ENCODE measurements at regions of chr4 and their contacts with region 1.

Region 1: GRCh38 chr4:95701500-95702170 is 138.3 kb upstream of the PDHA2 start:
- DNase-seq: peak in 1 of 2 donors; percentile 18
- H3K4me3 ChIP-seq: no peak overlapping the region
- H3K27ac ChIP-seq: peak overlapping the region; percentile 73 to 79
- H3K4me1 ChIP-seq: no peaks in the 10 kb centered on the region
- H3K27me3 ChIP-seq: no peaks in the 10 kb centered on the region
- CTCF ChIP-seq: no peak
- POLR2A ChIP-seq: no peak

Region 2: DNA sequence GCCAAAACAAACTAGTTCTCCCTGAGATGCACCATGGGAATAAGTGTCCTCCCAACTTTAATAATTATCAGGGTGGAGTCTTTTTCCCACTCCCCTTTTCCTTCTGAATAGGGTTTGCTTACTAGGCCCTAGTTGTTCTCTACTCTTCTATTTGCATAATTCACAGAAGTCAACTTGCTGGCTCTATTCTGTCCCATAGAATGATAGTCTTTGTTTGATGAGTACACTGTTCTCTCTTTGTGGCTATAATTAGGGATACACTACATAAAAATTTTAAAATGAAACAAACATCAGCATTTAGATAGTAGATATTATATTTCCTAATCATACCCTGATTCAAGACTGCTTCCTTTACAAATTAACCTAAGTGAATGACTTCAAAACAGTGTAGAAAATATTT is 148.5 kb after region 1 on chr4:
- intact Hi-C with region 1: no loop called
- DNase-seq: no peak
- H3K4me3 ChIP-seq: no peak overlapping the region
- H3K27ac ChIP-seq: no peak overlapping the region
- H3K4me1 ChIP-seq: no peaks in the 10 kb centered on the region
- H3K27me3 ChIP-seq: no peaks in the 10 kb centered on the region
- CTCF ChIP-seq: no peak
- POLR2A ChIP-seq: no peak

Region 3: DNA sequence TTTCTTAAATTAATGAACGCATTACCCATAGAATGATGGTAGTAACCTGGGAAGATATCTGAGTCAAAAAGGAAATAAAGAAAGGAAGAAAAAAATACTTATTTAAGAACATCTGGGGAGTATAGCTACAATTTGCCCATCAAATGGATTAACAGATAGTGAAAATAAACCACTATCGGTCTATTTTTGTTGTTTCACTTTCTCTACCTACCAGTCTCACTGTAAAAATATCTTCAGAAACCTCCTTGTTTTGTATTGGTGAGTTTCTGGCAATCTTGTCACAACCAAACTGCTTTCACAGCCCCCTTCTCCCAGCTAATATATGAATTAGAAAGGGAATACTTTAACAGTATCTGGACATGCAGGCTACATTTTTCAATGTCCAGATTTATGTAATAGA is 1658.2 kb after region 1 on chr4:
- intact Hi-C with region 1: loop called (anchors 5 kb)
- DNase-seq: no peak
- H3K4me3 ChIP-seq: no peak overlapping the region
- H3K27ac ChIP-seq: no peak overlapping the region
- H3K4me1 ChIP-seq: no peaks in the 10 kb centered on the region
- H3K27me3 ChIP-seq: no peaks in the 10 kb centered on the region
- CTCF ChIP-seq: no peak
- POLR2A ChIP-seq: no peak

Measured in breast epithelium (tissue), 4 donors.